Colonic mucosa (tissue), 4 donors: ENCODE measurements at regions of chr15 and their contacts with region 1.

Region 1: GRCh38 chr15:79989682-79990081 is 18.7 kb upstream of the BCL2A1 start:
- DNase-seq: no peak
- H3K4me3 ChIP-seq: no peak overlapping the region
- H3K27ac ChIP-seq: no peak overlapping the region
- H3K4me1 ChIP-seq: no peaks in the 10 kb centered on the region
- H3K27me3 ChIP-seq: no peaks in the 10 kb centered on the region
- CTCF ChIP-seq: no peak

Region 2: GRCh38 chr15:79853458-79854328 is 136.0 kb before region 1 on chr15:
- intact Hi-C with region 1: loop called (anchors 10 kb)
- DNase-seq: peak; percentile 54
- H3K4me3 ChIP-seq: no peak overlapping the region
- H3K27ac ChIP-seq: no peak overlapping the region
- H3K4me1 ChIP-seq: no peaks in the 10 kb centered on the region
- H3K27me3 ChIP-seq: no peaks in the 10 kb centered on the region
- CTCF ChIP-seq: peak; percentile 92

Region 3: DNA sequence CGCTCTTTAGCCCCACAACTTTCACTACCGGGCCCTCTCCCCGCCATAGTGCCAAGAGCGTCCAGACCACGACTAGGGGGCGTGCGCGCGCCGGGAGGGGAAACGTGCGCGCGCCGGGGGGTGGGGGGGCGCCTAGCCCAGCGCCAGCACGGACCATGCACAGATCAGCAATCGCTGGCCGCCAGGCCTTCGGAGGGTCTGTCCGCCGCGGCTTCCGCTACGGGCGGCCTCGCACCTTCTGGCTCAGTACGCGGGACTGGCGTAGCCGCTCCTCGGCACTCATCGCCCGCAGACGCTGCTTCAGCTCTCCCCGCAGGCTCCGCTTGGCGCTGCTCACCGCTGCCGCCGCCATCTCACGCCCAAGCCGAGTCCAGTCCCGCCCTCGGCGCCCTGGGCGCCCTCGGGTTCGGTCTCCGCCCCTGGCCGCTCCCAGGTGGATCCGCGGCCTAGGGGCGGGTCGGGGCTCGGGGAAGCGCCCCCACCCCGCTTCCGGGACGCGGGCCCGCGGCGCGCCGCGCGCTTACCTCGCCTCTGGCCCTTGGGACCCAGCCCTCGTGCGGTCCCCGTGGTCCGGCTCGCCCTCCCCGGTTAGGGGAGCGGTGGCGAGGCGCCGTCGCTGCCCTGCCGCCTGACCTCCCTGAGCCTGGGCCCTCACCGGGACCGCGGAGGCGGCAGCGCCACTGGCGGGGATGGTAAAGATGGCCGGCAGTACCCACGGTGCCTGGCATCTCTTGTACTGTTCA is 92.9 kb before region 1 on chr15 and contains the start of gene MTHFS:
- intact Hi-C with region 1: loop called (anchors 10 kb)
- DNase-seq: peak; percentile 84
- H3K4me3 ChIP-seq: peak within 1 kb of the TSS; percentile 86
- H3K27ac ChIP-seq: peak within 1 kb of the TSS; percentile 95
- H3K4me1 ChIP-seq: peaks cover 6% of the 10 kb centered on the region
- H3K27me3 ChIP-seq: no peaks in the 10 kb centered on the region
- CTCF ChIP-seq: peak; percentile 34
- total RNA-seq, gene MTHFS: 24.6 to 25.9 TPM